PC-9 (cell line): ENCODE measurements at regions of chr16 and their contacts with region 1.

Region 1: DNA sequence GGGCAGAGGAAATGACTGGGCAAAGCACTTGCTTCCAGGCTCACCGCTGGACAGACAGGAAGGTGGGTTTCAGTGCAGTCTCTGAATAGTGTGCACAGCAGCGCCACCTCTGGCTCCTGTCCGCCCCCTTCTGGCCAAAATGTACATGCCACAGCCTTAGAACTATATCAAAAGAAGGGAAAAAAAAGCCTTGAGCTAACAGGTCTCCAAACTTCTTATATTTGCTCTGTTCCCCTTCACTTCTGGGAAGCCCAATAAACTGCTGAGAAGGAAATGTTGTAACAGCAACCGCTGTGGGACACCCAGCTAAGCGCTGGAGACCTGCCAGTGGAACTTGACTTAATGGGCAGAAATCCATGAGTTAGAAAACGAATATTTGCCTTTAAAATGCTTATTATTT is 17.5 kb downstream of the COG7 start:
- DNase-seq: peak; percentile 55 to 67
- H3K4me3 ChIP-seq: no peak overlapping the region
- H3K27ac ChIP-seq: no peak overlapping the region
- H3K4me1 ChIP-seq: peaks cover 3% of the 10 kb centered on the region; the same call in 1 of the 2 replicates
- H3K27me3 ChIP-seq: no peaks in the 10 kb centered on the region
- CTCF ChIP-seq: peak; percentile 90

Region 2: GRCh38 chr16:22641131-22641628 is 794.3 kb before region 1 on chr16:
- CTCF ChIA-PET with region 1: no interaction called
- POLR2A ChIA-PET with region 1: no interaction called
- intact Hi-C with region 1: no loop called
- DNase-seq: peak in 1 of 2 experiments; percentile 22
- H3K4me3 ChIP-seq: no peak overlapping the region
- H3K27ac ChIP-seq: no peak overlapping the region
- H3K4me1 ChIP-seq: peaks cover 18% of the 10 kb centered on the region
- H3K27me3 ChIP-seq: no peaks in the 10 kb centered on the region; the same call in 1 of the 2 replicates
- CTCF ChIP-seq: no peak

Region 3: GRCh38 chr16:22898874-22899348 is 536.6 kb before region 1 on chr16:
- CTCF ChIA-PET with region 1: no interaction called
- POLR2A ChIA-PET with region 1: no interaction called
- intact Hi-C with region 1: loop called (anchors 5 kb)
- DNase-seq: peak; percentile 39 to 63
- H3K4me3 ChIP-seq: no peak overlapping the region
- H3K27ac ChIP-seq: no peak overlapping the region
- H3K4me1 ChIP-seq: no peaks in the 10 kb centered on the region
- H3K27me3 ChIP-seq: peaks cover 64% of the 10 kb centered on the region
- CTCF ChIP-seq: peak; percentile 82

Region 4: GRCh38 chr16:23182460-23183309 is 252.8 kb before region 1 on chr16 and contains the start of gene SCNN1G:
- CTCF ChIA-PET with region 1: interaction called, 62 read pairs
- POLR2A ChIA-PET with region 1: interaction called, 4 read pairs
- intact Hi-C with region 1: loop called (anchors 1 kb)
- DNase-seq: peak; percentile 75 to 99
- H3K4me3 ChIP-seq: peak within 1 kb of the TSS; percentile 81
- H3K27ac ChIP-seq: no peak within 1 kb of the TSS
- H3K4me1 ChIP-seq: peaks cover 27% of the 10 kb centered on the region
- H3K27me3 ChIP-seq: no peaks in the 10 kb centered on the region
- CTCF ChIP-seq: peak; percentile 85
- total RNA-seq, gene SCNN1G: not detected in 2 replicates

Region 5: DNA sequence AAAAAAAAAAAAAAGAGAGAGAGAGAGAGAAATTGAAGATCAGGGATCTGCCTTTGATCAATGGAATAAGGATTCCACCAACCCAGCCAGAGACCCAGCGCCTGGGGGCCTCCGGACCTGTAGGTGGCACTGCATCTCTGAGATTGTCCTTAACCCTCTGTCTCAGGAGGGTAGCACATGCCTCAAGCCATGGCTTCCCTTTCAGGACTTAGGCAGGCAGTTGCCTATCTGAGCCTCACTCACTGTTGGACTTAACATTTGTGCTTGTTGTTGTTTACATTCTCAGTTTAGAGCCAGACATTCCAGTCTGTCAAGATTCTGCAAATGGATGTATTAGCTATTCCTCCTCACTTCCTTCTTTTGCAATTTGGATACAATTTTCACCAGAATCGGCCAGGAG is 138.5 kb before region 1 on chr16:
- CTCF ChIA-PET with region 1: no interaction called
- POLR2A ChIA-PET with region 1: no interaction called
- intact Hi-C with region 1: loop called (anchors 10 kb)
- DNase-seq: peak; percentile 29 to 86
- H3K4me3 ChIP-seq: 0 out of 2 replicates have a peak overlapping the region, but pooled peaks have one; percentile 13
- H3K27ac ChIP-seq: peak overlapping the region; percentile 42
- H3K4me1 ChIP-seq: peaks cover 42% of the 10 kb centered on the region
- H3K27me3 ChIP-seq: no peaks in the 10 kb centered on the region
- CTCF ChIP-seq: peak; percentile 55; the same call in 1 of the 2 replicates

Region 6: DNA sequence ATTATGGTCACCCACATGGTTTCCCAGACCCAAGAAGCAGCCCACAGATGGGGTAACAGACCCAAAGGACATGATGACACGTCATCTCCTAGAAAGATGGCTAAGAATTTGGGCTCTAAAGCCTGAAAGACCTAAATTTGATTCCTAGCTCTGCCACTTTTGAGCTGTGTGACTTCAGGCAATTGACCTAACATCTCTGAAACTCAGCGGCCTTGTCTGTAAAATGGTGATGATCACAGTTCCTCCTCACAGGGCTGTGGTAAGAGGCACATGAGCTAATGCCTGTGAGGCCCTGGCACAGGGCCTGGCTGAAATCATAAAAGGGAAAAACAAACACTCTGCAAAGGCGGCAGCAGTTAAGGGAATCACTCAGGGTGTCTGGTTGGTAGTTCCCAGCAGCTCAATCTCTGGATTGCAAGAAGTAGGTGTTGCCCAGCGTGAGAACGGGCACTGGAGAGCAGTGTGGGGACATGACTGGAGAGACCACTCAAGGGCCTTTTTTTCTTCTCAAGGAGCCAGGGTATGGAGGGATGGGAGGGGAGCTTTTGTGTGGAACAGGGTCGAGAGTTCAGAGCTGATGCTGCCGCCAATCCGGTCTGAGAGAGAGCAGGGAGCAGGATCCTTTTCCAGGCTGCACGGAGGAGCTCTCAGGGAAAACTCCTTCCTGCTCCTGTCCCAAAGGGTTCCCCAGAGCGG is 118.4 kb before region 1 on chr16:
- CTCF ChIA-PET with region 1: no interaction called
- POLR2A ChIA-PET with region 1: no interaction called
- intact Hi-C with region 1: no loop called
- DNase-seq: no peak
- H3K4me3 ChIP-seq: no peak overlapping the region
- H3K27ac ChIP-seq: no peak overlapping the region
- H3K4me1 ChIP-seq: no peaks in the 10 kb centered on the region
- H3K27me3 ChIP-seq: no peaks in the 10 kb centered on the region
- CTCF ChIP-seq: no peak

Region 7: DNA sequence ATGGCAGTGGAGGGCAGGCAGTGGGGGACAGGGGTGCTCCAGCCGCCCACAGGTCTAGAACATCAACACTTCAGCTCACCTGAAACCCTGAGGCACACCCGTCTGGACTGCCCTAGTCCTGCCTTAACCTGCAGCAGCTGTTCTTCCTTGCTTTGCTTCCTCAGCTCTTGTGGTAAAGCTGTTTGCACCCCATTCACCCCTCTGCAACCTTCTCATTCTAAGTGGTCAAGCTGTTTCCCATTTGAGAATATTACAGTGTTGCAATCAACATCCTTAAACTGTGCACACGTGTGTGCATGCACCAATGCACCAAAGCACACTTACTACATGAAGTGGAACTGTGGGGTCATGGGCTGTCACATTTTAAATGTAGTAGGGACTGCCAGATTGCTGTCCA is 101.0 kb before region 1 on chr16:
- CTCF ChIA-PET with region 1: interaction called, 10 read pairs
- POLR2A ChIA-PET with region 1: no interaction called
- intact Hi-C with region 1: loop called (anchors 2 kb)
- DNase-seq: no peak
- H3K4me3 ChIP-seq: no peak overlapping the region
- H3K27ac ChIP-seq: peak overlapping the region; percentile 16; the same call in 1 of the 2 replicates
- H3K4me1 ChIP-seq: peaks cover 46% of the 10 kb centered on the region
- H3K27me3 ChIP-seq: no peaks in the 10 kb centered on the region
- CTCF ChIP-seq: no peak

Region 8: DNA sequence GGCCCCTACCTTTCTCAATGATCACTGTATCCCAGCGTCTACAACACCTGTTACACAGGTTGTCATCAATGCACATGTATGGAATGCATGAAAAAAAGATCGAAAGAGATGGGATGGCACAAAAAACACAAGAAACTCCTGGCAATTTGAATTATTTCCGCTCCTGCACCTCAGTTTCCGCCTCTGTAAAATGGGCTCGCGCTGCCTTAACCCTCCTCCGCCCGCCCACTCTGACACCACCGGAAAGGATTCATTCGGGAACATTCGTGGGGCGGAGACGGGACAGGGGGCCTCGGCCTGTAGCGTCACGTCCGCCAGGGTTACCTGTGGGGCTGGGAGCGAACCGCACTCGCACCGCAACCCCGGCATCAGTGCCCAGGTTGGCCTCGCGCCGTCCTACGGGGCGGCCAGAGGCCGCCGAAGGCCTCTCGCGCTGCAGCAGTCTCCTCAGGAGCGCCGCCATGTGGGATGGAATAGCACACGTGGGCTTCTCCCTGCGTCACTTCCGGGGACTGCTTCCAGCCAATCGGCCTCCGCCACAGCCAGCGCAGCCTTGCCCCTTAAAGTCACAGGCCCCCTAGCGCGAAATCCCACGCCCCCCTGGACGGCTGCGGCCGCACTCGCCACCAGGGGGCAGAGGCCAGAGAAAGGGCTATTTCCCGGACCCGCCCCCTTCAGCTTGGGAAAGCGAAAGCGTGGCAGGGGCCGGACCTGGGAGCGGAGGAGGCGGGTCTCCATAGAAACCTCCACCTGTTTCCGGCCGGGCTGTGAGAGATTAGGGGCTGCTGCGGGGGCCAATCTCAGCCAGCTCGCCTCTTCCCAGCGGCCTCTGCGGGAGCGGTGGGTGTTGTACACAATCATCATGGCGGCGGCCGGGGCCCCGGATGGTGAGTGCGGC is 121.6 kb after region 1 on chr16 and contains the starts of genes EARS2 and UBFD1:
- CTCF ChIA-PET with region 1: interaction called, 3 read pairs
- POLR2A ChIA-PET with region 1: no interaction called
- intact Hi-C with region 1: loop called (anchors 5 kb)
- DNase-seq: peak; percentile 94 to 100
- H3K4me3 ChIP-seq: peak within 1 kb of the TSS; percentile 98
- H3K27ac ChIP-seq: peak within 1 kb of the TSS; percentile 79
- H3K4me1 ChIP-seq: peaks cover 26% of the 10 kb centered on the region
- H3K27me3 ChIP-seq: no peaks in the 10 kb centered on the region
- CTCF ChIP-seq: peak; percentile 89
- total RNA-seq, gene EARS2: 34.9 and 43.3 TPM in 2 replicates
- total RNA-seq, gene UBFD1: 95.8 and 98.2 TPM in 2 replicates